Activated CD4-positive, alpha-beta T cell treated with anti-CD3 and anti-CD28 coated beads for 36 hours (primary cell): ENCODE measurements at regions of chr3 and their contacts with region 1.

Region 1: GRCh38 chr3:149771652-149772271 is 19.5 kb upstream of the COMMD2 start:
- DNase-seq: peak; percentile 65
- ATAC-seq: peak; percentile 49
- H3K4me3 Mint-ChIP-seq: no peak overlapping the region
- H3K27ac Mint-ChIP-seq: no peak overlapping the region
- H3K4me1 Mint-ChIP-seq: no peaks in the 10 kb centered on the region
- H3K27me3 Mint-ChIP-seq: peaks cover 11% of the 10 kb centered on the region

Region 2: GRCh38 chr3:149494022-149494758 is 277.6 kb before region 1 on chr3:
- CTCF ChIA-PET with region 1: interaction called, 4 read pairs
- POLR2A ChIA-PET with region 1: no interaction called
- intact Hi-C with region 1: loop called in 1 of 2 experiments (anchors 5 kb)
- DNase-seq: peak; percentile 67
- ATAC-seq: no peak
- H3K4me3 Mint-ChIP-seq: no peak overlapping the region
- H3K27ac Mint-ChIP-seq: no peak overlapping the region
- H3K4me1 Mint-ChIP-seq: no peaks in the 10 kb centered on the region
- H3K27me3 Mint-ChIP-seq: peaks cover 25% of the 10 kb centered on the region

Region 3: DNA sequence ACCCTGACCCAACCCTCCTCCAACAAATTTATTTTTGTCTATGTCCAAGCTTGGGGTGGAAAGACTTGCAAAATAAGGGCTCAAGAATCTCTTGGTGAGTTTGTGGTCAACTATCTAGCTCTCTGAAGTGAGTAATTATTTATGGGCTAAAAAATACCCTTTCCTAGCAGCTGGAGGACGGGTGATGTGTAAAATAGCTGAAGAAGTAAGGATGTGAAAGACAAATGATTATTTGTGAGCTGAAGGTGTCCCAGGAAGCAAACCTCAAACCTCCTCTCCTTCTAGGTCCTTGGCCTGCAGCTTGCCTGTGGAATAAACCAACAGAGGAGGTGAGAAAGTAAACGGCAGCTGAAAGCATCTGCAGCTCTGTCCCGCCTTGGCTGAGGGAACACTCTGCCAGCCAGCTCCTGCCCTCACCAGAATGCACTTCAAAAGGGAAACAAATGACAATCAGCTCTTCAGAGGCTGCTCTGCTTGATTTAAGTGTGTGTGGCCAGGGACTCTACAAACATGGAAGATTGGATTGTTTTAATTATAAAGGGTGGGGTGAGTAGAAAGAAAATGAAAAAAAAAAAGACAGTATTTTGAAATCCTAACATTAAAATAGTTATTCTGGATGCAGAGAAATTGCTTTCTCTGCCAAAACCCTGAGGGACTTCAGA is 237.0 kb before region 1 on chr3:
- CTCF ChIA-PET with region 1: interaction called, 3 read pairs
- POLR2A ChIA-PET with region 1: no interaction called
- intact Hi-C with region 1: loop called in 1 of 2 experiments (anchors 5 kb)
- DNase-seq: no peak
- ATAC-seq: no peak
- H3K4me3 Mint-ChIP-seq: no peak overlapping the region
- H3K27ac Mint-ChIP-seq: no peak overlapping the region
- H3K4me1 Mint-ChIP-seq: peaks cover 6% of the 10 kb centered on the region
- H3K27me3 Mint-ChIP-seq: peaks cover 2% of the 10 kb centered on the region

Region 4: GRCh38 chr3:149670742-149671492 is 100.8 kb before region 1 on chr3:
- CTCF ChIA-PET with region 1: no interaction called
- POLR2A ChIA-PET with region 1: no interaction called
- intact Hi-C with region 1: no loop called
- DNase-seq: no peak
- ATAC-seq: no peak
- H3K4me3 Mint-ChIP-seq: no peak overlapping the region
- H3K27ac Mint-ChIP-seq: no peak overlapping the region
- H3K4me1 Mint-ChIP-seq: peaks cover 4% of the 10 kb centered on the region
- H3K27me3 Mint-ChIP-seq: peaks cover 8% of the 10 kb centered on the region

Region 5: GRCh38 chr3:149752051-149752787 is 19.5 kb before region 1 on chr3 and contains the start of gene COMMD2:
- CTCF ChIA-PET with region 1: interaction called, 24 read pairs
- POLR2A ChIA-PET with region 1: interaction called, 3 read pairs
- intact Hi-C with region 1: no loop called
- DNase-seq: peak; percentile 88
- ATAC-seq: peak; percentile 100
- H3K4me3 Mint-ChIP-seq: peak within 1 kb of the TSS; percentile 95
- H3K27ac Mint-ChIP-seq: peak within 1 kb of the TSS; percentile 91
- H3K4me1 Mint-ChIP-seq: peaks cover 25% of the 10 kb centered on the region
- H3K27me3 Mint-ChIP-seq: no peaks in the 10 kb centered on the region
- total RNA-seq, gene COMMD2: 29.4 to 29.5 TPM

Region 6: GRCh38 chr3:149812606-149813366 is 41.0 kb after region 1 on chr3 and contains the start of gene RNF13:
- CTCF ChIA-PET with region 1: interaction called, 46 read pairs
- POLR2A ChIA-PET with region 1: no interaction called
- intact Hi-C with region 1: loop called in 1 of 2 experiments (anchors 5 kb)
- DNase-seq: peak; percentile 96
- ATAC-seq: peak; percentile 95
- H3K4me3 Mint-ChIP-seq: peak within 1 kb of the TSS; percentile 95
- H3K27ac Mint-ChIP-seq: peak within 1 kb of the TSS; percentile 100
- H3K4me1 Mint-ChIP-seq: peaks cover 46% of the 10 kb centered on the region
- H3K27me3 Mint-ChIP-seq: peaks cover 3% of the 10 kb centered on the region
- total RNA-seq, gene RNF13: 28.8 to 41.2 TPM